Right cardiac atrium (tissue), 5 donors: ENCODE measurements at regions of chr3 and their contacts with region 1.

Region 1: GRCh38 chr3:45026957-45027356 is 854 bp downstream of the CLEC3B start:
- DNase-seq: peak; percentile 94 to 96 (median 95)
- ATAC-seq: peak; percentile 84 to 88
- H3K4me3 ChIP-seq: peak overlapping the region; percentile 69
- H3K27ac ChIP-seq: peak overlapping the region; percentile 57
- H3K4me1 ChIP-seq: peaks cover 13% of the 10 kb centered on the region
- H3K27me3 ChIP-seq: no peaks in the 10 kb centered on the region

Region 2: DNA sequence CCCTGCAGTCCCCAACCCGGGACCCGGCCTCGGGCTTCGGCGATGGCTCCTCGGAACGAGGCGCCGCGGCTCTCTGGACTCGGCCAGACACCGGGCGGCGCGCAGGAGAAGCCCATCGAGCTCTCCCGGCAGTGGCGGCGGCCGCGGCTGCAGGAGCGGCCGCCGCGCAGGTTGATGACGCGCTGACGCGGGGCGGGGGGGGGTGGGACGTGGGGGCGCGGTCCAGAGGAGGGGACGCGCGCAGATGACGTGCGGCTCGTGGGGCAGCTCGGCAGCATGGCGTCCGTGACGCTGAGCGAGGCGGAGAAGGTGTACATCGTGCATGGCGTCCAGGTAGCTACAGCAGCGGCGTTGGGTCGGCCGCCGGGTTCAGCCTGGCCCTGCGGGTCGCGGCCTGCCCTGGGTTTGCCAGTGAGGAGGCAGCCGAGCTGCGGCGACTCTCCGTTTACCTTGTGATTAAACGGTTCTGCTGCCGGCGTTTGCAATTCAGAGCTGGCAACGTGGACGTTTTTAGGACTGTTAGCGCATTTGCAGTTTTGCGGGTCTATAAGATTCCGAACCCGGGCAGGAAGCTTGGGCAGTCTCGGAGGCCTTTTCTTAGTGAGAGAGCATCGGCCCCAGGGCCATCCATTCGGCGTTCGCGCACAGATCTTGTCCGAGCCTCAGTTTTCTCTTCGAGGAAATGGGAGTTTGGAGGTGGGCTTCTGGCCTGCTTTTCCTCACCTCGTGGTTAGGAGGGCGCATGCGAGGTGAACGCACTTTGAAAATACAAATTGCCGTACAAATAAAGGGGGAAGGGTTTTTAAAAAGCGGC is 50.7 kb before region 1 on chr3 and contains the starts of genes EXOSC7 and ZDHHC3:
- intact Hi-C with region 1: loop called in 2 of 4 experiments (anchors 5 to 10 kb)
- DNase-seq: peak; percentile 89 to 96 (median 94)
- ATAC-seq: peak; percentile 94 to 95
- H3K4me3 ChIP-seq: peak within 1 kb of the TSS; percentile 94
- H3K27ac ChIP-seq: peak within 1 kb of the TSS; percentile 92
- H3K4me1 ChIP-seq: peaks cover 5% of the 10 kb centered on the region
- H3K27me3 ChIP-seq: no peaks in the 10 kb centered on the region
- total RNA-seq, gene EXOSC7: 22.7 to 37.5 (median 27.8) TPM
- total RNA-seq, gene ZDHHC3: 39.0 to 57.6 (median 40.8) TPM

Region 3: DNA sequence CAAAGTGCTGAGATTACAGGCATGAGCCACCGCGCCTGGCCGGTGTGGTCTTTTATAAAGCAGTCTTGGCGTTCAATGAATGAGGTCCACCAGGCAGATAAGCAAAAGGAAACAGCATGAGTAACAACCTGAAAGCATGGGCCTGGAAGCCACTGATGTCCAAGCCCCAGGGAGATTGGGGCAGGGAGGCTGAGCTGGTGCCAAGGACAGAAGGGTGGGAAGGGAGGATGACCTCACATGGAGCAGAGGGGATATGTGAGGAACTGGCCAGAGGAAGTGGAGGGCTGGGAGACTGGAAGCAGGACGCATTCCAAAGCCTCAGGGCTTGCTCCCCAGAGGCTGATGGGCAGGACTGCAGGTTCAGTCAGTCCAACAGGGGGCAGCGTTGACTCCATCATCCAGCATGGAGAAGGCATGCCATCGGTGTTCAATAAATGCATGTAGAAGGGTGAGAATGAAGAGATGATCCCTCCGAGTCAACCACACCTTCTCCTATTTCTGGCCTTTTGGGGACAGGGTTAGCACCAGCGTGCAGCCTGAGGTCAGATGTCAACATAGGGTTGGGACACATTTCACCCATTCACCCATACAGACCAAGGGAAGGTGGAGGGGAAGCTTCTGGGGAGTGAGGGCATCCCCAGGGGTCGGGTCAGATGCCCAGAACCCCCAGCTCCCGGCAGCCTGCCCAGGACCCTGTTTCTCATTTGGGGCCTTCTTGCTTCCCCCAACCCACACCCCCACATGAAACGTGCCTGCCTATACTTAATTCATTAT is 1821.5 kb after region 1 on chr3:
- intact Hi-C with region 1: no loop called
- DNase-seq: peak; percentile 76 to 81 (median 77)
- ATAC-seq: peak; percentile 13 to 75
- H3K4me3 ChIP-seq: no peak overlapping the region
- H3K27ac ChIP-seq: no peak overlapping the region
- H3K4me1 ChIP-seq: no peaks in the 10 kb centered on the region
- H3K27me3 ChIP-seq: no peaks in the 10 kb centered on the region